ENCODE measurements at regions of chr7 and their contacts with region 1.

Region 1: GRCh38 chr7:100889761-100890634 is 483 bp upstream of the UFSP1 start:
- DNase-seq: peak; percentile 97
- ATAC-seq: peak; percentile 94
- H3K4me3 ChIP-seq: peak overlapping the region; percentile 11 to 35
- H3K27ac ChIP-seq: peak overlapping the region in 1 of 2 donors; percentile 52
- H3K4me1 ChIP-seq: no peaks in the 10 kb centered on the region
- H3K27me3 ChIP-seq: no peaks in the 10 kb centered on the region

Region 2: DNA sequence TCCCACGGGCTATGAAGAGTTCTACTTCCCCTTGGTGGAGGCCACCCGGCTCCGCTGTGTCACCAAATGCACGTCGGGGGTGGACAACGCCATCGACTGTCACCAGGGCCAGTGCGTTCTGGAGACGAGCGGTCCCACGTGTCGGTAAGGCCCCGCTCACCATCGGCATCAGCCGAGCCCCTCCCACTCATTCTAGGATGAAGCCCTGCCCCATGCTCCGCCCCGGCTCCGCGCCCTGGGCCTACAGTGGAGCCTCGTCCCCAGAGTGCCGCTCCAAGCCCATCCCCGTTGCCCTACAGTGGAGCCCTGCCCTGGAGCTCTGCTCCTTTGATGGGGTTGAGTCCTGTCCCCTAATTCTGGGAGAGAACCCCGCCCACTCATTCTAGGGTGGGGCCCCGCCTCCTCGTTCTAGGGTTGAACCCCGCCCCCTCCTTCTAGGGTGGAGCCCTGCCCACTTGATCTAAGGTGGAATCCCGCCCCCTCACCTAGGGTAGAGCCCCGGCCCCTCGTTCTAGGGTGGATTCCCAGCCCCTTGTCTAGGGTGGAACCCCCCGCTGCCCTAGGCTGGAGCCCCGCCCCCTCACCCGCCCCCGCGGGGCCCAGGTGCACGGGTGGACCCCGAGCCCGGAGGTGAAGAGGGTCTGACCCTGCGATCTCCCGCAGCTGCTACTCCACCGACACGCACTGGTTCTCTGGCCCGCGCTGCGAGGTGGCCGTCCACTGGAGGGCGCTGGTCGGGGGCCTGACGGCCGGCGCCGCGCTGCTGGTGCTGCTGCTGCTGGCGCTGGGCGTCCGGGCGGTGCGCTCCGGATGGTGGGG is 75.9 kb after region 1 on chr7:
- intact Hi-C with region 1: loop called in 1 of 2 experiments (anchors 5 kb)
- DNase-seq: peak; percentile 85 to 92
- ATAC-seq: peak; percentile 28
- H3K4me3 ChIP-seq: no peak overlapping the region
- H3K27ac ChIP-seq: no peak overlapping the region
- H3K4me1 ChIP-seq: no peaks in the 10 kb centered on the region
- H3K27me3 ChIP-seq: peaks cover 0 to 2% of the 10 kb centered on the region in 2 donors

Region 3: GRCh38 chr7:101058355-101058754 is 168.4 kb after region 1 on chr7:
- intact Hi-C with region 1: loop called in 1 of 2 experiments (anchors 2 kb)
- DNase-seq: peak; percentile 69 to 88
- ATAC-seq: peak; percentile 81
- H3K4me3 ChIP-seq: no peak overlapping the region
- H3K27ac ChIP-seq: no peak overlapping the region
- H3K4me1 ChIP-seq: no peaks in the 10 kb centered on the region
- H3K27me3 ChIP-seq: no peaks in the 10 kb centered on the region

Region 4: DNA sequence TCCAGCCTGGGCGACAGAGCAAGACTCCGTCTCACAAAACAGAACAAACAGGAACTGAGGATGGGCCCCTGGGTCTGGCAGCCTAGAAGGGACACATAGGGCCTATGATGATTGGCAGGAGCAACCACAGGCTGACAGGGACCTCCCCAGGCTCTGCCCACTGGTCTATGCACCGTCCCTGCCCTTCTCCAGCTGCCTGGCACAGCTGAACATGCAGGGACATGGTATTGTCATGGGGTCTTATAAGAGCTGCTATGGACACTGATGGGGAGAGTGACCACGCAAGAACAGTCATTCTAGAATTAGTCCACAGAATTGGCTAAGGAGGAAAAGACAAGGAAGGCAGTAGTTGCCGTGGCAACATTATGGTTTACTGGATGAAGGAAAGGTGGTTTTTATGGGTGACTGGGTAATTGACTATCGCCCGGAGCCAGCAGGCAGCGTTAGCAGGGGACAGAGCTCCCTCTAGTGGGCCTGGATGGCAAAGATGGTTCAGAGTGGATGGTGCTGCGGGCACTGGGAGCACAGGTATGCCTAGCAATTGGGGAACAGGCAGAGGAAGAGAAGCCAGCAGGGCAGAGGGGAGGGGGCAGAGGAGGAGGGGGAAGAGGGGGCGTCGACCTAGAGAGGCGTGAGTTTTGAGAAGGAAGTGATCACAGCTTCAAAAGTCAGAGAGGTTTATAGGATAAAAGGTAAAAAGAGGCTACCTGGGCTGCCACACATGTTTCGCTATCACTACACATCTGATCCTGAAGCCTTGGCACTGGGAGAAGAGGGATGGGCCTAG is 187.5 kb after region 1 on chr7:
- intact Hi-C with region 1: loop called in 1 of 2 experiments (anchors 5 kb)
- DNase-seq: peak; percentile 79 to 91
- ATAC-seq: peak; percentile 82
- H3K4me3 ChIP-seq: no peak overlapping the region
- H3K27ac ChIP-seq: no peak overlapping the region
- H3K4me1 ChIP-seq: no peaks in the 10 kb centered on the region
- H3K27me3 ChIP-seq: no peaks in the 10 kb centered on the region

Region 5: GRCh38 chr7:101165075-101165957 is 275.3 kb after region 1 on chr7 and contains the start of gene VGF:
- intact Hi-C with region 1: loop called in 1 of 2 experiments (anchors 10 kb)
- DNase-seq: peak; percentile 95 to 98
- ATAC-seq: peak; percentile 92
- H3K4me3 ChIP-seq: no peak within 1 kb of the TSS
- H3K27ac ChIP-seq: no peak within 1 kb of the TSS
- H3K4me1 ChIP-seq: no peaks in the 10 kb centered on the region
- H3K27me3 ChIP-seq: peaks cover 0 to 11% of the 10 kb centered on the region in 2 donors
- total RNA-seq, gene VGF: not detected

Measured in aorta (tissue), 5 donors.